A549 (cell line): ENCODE measurements at regions of chr10 and their contacts with region 1.

Region 1: DNA sequence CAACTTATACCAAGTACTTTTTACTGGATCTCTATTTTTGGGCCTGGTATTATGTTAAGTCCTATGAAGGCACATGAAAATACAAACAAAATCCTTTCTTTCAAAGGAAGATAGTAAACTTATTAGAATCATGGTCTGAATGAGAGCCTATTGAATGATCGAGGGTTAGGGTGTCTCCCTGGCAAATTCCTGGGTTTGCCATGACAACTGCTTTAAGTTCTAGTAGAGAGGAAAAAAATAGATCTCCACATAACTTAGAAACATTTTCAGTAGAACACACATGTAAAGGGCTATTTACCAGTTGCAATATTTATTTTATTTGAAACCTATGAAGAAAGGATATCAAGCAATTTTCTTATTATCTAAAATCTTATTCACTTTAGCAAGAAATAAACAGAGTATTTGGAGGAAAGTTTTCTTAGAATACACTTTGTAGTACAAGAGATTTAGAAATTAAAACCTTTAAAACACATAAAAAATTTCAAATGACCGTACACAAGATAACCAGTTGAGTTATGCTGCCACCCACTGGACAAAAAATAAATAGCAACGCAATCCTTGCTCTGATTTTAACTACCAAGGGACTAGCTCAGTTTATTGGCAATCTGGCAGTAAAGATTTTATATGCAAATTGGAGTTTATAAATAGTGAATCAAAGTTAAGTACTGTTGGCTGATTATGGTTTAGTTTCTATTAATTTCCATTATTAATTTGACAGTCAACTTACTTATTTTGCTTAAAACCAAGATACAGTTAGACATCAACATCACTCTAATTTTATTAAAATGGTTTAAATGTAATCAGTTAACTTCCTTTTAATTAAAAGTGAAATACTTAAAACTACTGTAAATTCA is 33.9 kb downstream of the CACUL1 start:
- DNase-seq: peak; percentile 31 to 47
- ATAC-seq: peak in 1 of 2 experiments; percentile 73; a peak in 3 of 6 replicates
- H3K4me3 ChIP-seq: no peak overlapping the region
- H3K27ac ChIP-seq: no peak overlapping the region
- H3K4me1 ChIP-seq: peaks cover 1% of the 10 kb centered on the region; the same call in 1 of the 3 replicates
- CTCF ChIP-seq: peak; percentile 90
- EP300 ChIP-seq: no peak
- POLR2A ChIP-seq: no peak
- RAD21 ChIP-seq: peak; percentile 71 to 75

Region 2: GRCh38 chr10:118594392-118595063 is 126.4 kb before region 1 on chr10:
- CTCF ChIA-PET with region 1: interaction called, 10 read pairs
- POLR2A ChIA-PET with region 1: no interaction called
- DNase-seq: peak; percentile 53 to 56
- ATAC-seq: peak; percentile 64 to 89
- H3K4me3 ChIP-seq: no peak overlapping the region
- H3K27ac ChIP-seq: no peak overlapping the region
- H3K4me1 ChIP-seq: no peaks in the 10 kb centered on the region
- CTCF ChIP-seq: no peak
- EP300 ChIP-seq: no peak
- POLR2A ChIP-seq: no peak
- RAD21 ChIP-seq: no peak; a peak in 2 of 5 replicates

Region 3: GRCh38 chr10:118732245-118733165 is 11.6 kb after region 1 on chr10:
- CTCF ChIA-PET with region 1: interaction called, 23 read pairs
- POLR2A ChIA-PET with region 1: no interaction called
- DNase-seq: no peak
- ATAC-seq: no peak
- H3K4me3 ChIP-seq: no peak overlapping the region
- H3K27ac ChIP-seq: no peak overlapping the region
- H3K4me1 ChIP-seq: peaks cover 30% of the 10 kb centered on the region
- CTCF ChIP-seq: no peak
- EP300 ChIP-seq: no peak
- POLR2A ChIP-seq: no peak
- RAD21 ChIP-seq: no peak

Region 4: DNA sequence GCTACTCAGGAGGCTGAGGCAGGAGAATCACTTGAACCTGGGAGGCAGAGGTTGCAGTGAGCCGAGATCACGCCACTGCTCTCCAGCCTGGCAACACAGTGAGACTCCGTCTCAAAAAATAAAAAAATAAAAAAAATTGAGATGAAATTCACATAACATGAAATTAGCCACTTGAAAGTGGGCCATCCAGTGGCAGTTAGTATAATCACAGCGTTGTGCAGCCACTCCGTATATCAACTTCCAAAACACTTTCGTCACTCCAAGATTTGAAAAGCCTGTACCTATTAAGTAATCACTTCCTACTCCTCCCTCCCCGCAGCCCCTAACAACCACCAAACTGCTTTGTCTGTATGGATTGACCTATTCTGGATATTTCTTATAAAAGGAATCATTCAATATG is 54.6 kb after region 1 on chr10:
- CTCF ChIA-PET with region 1: no interaction called
- POLR2A ChIA-PET with region 1: no interaction called
- DNase-seq: no peak
- ATAC-seq: no peak
- H3K4me3 ChIP-seq: no peak overlapping the region
- H3K27ac ChIP-seq: no peak overlapping the region
- H3K4me1 ChIP-seq: no peaks in the 10 kb centered on the region
- CTCF ChIP-seq: no peak
- EP300 ChIP-seq: no peak
- POLR2A ChIP-seq: no peak
- RAD21 ChIP-seq: no peak

Region 5: GRCh38 chr10:118809357-118810220 is 88.7 kb after region 1 on chr10:
- CTCF ChIA-PET with region 1: no interaction called
- POLR2A ChIA-PET with region 1: no interaction called
- DNase-seq: no peak
- ATAC-seq: no peak
- H3K4me3 ChIP-seq: no peak overlapping the region
- H3K27ac ChIP-seq: no peak overlapping the region
- H3K4me1 ChIP-seq: no peaks in the 10 kb centered on the region
- CTCF ChIP-seq: no peak
- EP300 ChIP-seq: no peak
- POLR2A ChIP-seq: no peak
- RAD21 ChIP-seq: no peak